GM10248 (cell line): ENCODE measurements at regions of chr11 and their contacts with region 1.

Region 1: DNA sequence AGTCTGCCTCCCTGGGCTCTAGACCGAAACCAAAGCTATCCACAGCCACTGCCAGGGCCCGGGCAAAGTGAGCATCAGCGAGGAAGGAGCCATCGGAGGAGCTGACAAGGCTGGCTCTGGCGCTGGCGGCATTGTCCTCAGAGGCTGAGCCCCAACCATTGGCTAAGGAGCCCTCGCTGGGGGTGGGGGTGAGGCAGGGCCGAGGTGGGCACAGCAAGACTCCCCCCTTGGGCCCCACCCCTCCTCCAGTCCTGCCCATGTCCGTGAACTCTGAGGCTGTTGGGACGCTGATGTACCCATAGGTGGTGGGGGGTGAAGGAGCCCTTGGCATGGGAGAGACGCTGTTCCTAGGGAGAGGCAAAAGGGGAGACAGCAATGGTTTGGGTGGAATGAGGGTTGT is 11.2 kb downstream of the ROBO4 start:
- DNase-seq: no peak
- CTCF ChIP-seq: no peak

Region 2: DNA sequence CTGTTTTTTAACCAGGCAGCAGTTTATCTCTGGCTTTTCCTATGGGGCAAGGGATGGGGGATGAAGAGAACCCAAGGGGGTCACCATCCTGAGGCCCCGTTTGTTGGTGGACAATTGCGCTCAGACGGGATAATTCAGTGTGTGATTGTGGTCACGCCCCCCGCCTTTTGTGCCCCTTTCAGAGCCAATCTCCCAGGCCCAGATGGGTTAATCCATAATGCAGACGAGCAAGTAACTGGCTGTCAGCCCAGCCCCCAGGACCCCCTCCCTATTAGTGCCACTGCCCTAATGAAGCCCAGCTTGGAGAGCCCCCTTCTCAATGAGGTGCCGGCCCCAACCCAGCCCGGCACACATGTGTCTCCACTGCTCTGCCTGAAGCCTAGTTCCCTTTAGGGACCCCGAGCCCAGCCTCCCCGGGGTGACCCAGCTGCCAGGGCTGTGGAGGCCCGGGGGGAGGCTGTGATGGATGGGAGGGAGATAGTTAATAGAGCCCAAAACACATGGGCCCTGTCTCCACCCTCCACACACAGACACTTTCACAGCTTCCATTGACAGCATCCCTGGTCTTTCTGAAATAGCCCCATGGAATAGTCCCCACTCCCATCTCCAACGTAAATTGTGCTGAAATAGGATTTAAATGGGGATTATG is 40.3 kb before region 1 on chr11:
- CTCF ChIA-PET with region 1: no interaction called
- POLR2A ChIA-PET with region 1: no interaction called
- DNase-seq: no peak
- CTCF ChIP-seq: no peak

Region 3: GRCh38 chr11:124875943-124876817 is 10.3 kb before region 1 on chr11:
- CTCF ChIA-PET with region 1: interaction called, 19 read pairs
- POLR2A ChIA-PET with region 1: no interaction called
- DNase-seq: peak; percentile 91
- CTCF ChIP-seq: peak; percentile 93

Region 4: DNA sequence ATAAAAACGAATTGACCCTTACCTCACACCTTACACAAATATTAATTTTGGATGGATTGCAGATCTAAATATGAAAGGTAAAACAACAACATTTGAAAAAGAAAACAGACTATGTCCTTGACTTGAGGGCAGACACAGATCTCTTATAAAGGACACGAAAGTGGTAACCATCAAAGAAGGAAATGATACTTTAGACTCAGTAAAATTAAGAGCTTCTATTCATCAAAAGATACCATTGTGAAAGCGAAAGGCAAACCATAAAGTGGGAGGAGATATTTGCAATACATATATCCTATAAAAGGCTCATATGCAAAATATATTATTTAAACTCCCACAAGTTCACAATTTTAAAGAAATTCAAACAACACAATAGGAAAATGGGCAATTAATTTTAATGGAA is 44.3 kb after region 1 on chr11:
- CTCF ChIA-PET with region 1: no interaction called
- POLR2A ChIA-PET with region 1: no interaction called
- DNase-seq: peak; percentile 39
- CTCF ChIP-seq: no peak

Region 5: GRCh38 chr11:124987096-124987495 is 100.6 kb after region 1 on chr11:
- CTCF ChIA-PET with region 1: no interaction called
- POLR2A ChIA-PET with region 1: no interaction called
- DNase-seq: no peak
- CTCF ChIP-seq: no peak